ENCODE measurements at regions of chr6 and their contacts with region 1.

Region 1: DNA sequence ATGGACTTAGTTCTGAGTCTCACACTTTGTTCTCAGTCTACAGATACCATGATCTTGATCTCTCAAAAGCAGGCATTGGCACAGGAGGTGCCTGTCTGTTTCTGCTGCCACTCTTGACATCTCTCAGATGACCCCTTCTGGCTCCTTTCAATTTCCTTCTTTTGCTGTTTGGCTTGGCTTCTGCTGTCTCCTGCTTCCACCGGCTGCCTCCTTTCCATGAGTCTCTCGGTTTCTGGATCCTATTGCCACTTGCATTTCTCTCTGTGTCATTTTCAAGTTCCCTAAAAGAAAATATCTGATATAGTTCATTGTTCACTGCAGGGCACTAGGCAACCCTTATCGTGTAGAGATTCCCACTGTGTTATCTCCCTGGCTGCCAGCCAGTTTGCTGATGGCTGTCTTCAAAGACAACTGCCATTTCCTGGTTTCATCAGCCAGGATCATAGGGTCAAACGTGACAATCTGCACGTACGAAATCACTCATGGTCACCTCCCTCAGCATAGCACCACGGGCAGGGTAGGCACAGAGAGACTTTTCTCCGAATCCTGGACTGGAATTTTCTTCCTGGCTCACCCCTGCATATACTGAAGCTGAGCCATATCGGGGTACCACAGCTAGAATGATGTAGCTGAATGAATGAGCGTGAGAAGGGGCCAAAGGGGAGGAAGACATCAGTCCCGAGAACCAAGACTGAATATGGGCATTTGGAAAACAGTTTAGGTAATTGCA is 144.6 kb upstream of the TMEM170B start:
- DNase-seq: peak; percentile 75 to 77
- H3K4me3 ChIP-seq: no peak overlapping the region; the same call in 1 of the 2 replicates
- H3K27ac ChIP-seq: peak overlapping the region; percentile 89
- H3K4me1 ChIP-seq: peaks cover 63% of the 10 kb centered on the region
- H3K27me3 ChIP-seq: no peaks in the 10 kb centered on the region
- CTCF ChIP-seq: no peak

Region 2: GRCh38 chr6:11207199-11207968 is 185.6 kb before region 1 on chr6:
- CTCF ChIA-PET with region 1: no interaction called
- POLR2A ChIA-PET with region 1: no interaction called
- intact Hi-C with region 1: loop called (anchors 1 kb)
- DNase-seq: peak; percentile 84 to 98
- H3K4me3 ChIP-seq: no peak overlapping the region; the same call in 1 of the 2 replicates
- H3K27ac ChIP-seq: peak overlapping the region; percentile 92
- H3K4me1 ChIP-seq: peaks cover 36% of the 10 kb centered on the region
- H3K27me3 ChIP-seq: no peaks in the 10 kb centered on the region
- CTCF ChIP-seq: no peak

Region 3: GRCh38 chr6:11381801-11382513 is 11.0 kb before region 1 on chr6:
- CTCF ChIA-PET with region 1: no interaction called
- POLR2A ChIA-PET with region 1: interaction called, 12 read pairs
- intact Hi-C with region 1: no loop called
- DNase-seq: no peak
- H3K4me3 ChIP-seq: no peak overlapping the region
- H3K27ac ChIP-seq: no peak overlapping the region
- H3K4me1 ChIP-seq: no peaks in the 10 kb centered on the region
- H3K27me3 ChIP-seq: no peaks in the 10 kb centered on the region
- CTCF ChIP-seq: no peak

Region 4: DNA sequence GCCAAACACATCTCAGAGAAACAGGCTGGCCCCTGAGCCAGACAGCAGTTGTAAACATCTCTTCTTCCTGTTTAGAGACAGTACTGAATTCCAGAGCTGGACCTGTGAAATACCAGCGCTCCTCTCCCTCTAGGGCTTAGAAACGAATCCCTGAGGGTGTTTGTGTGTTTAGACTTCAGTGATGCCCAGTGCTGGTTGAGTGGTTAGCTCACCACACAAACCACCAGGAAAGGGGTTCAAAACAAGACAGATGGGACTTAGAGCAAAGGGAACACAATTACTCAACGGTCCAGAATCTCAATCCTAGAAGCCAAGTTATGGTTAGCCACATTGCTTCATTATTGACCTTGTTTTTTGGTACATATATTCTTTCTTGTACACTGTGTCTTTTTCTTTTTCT is 36.0 kb after region 1 on chr6:
- CTCF ChIA-PET with region 1: no interaction called
- POLR2A ChIA-PET with region 1: no interaction called
- intact Hi-C with region 1: loop called (anchors 1 kb)
- DNase-seq: peak; percentile 47 to 89
- H3K4me3 ChIP-seq: no peak overlapping the region
- H3K27ac ChIP-seq: peak overlapping the region; percentile 80
- H3K4me1 ChIP-seq: peaks cover 90% of the 10 kb centered on the region
- H3K27me3 ChIP-seq: no peaks in the 10 kb centered on the region
- CTCF ChIP-seq: no peak